ENCODE measurements at regions of chr4 and their contacts with region 1.

Region 1: DNA sequence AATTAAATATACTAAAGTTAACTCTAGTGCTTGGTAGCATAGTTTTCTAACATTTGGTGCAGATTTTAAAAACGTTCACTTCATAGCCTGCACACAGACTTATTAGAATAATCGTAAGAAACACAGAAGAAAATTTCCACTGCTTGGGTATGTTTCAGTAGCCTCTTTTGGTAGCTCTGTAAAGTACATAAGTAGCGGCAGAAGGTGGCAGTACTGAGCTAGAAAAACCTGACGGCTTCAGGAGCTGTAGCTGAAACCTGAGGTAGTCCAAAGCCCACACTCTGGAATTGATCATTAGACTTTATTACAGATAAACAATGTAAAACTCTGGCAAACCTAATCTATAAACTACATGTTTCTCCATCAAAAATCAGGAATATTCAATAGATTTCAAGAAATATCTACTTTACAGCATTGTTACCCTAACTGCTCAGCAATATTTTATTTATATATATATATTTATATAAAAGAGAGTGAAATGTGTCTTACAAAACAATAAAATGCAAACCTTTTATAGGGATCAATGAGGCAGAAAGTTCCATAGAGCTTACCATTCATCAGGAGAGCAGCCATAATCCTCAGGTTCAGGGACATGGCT is 88.2 kb downstream of the ATP8A1 start:
- DNase-seq: peak; percentile 77 to 90 (median 83)
- H3K4me3 ChIP-seq: no peak overlapping the region
- H3K27ac ChIP-seq: peak overlapping the region in 1 of 2 experiments; percentile 28
- H3K4me1 ChIP-seq: no peaks in the 10 kb centered on the region
- H3K27me3 ChIP-seq: no peaks in the 10 kb centered on the region

Region 2: DNA sequence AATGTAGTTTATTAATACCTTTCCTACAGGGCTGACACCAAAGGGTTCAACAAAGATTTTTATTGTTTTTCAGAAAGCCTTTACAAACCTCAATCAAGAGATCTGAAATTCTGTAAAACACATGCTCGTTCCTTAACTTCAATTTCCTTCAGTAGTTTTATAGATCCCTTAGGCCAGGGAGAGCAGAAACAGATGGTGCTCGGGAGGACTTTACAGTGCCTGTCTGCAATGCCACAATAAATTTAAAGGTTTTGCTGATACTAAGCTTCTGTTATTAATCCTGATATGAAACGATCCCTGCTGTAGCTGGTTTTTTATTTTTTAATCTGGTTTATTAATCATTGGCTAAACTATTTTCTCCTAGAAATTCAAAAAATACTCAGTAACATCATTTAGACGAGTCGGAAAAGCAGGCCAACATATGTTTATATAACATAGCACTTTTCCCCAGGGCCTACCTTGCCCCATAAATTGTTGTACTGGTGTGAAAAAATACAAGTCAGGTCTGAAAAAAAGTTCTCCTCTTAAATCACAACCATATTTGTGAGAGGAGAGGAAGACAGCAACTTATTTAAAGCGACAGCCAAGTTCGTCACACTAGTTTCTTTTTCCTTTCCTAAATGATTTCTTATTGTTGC is 131.7 kb before region 1 on chr4:
- CTCF ChIA-PET with region 1: no interaction called
- POLR2A ChIA-PET with region 1: no interaction called
- DNase-seq: no peak
- H3K4me3 ChIP-seq: no peak overlapping the region
- H3K27ac ChIP-seq: no peak overlapping the region
- H3K4me1 ChIP-seq: no peaks in the 10 kb centered on the region
- H3K27me3 ChIP-seq: no peaks in the 10 kb centered on the region

Region 3: DNA sequence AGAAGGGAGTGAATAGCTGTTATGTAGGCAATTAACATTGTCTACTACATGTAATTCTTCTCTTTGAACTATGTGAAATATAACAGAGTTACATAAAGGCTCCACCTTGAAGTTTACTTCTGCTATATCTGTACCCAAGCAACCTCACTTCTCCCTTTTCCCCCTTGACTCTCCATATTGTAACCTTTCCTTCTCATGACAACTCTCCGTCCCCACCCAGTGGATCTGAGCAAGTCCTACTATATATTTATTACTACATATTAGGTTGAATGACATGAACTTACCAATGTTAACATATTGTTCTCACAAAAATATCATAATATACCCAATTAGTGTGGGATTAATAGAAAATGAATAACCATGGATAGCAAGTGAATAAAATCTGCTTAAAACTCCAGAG is 181.4 kb after region 1 on chr4:
- CTCF ChIA-PET with region 1: interaction called, 90 read pairs
- POLR2A ChIA-PET with region 1: no interaction called
- DNase-seq: peak; percentile 86 to 96 (median 95)
- H3K4me3 ChIP-seq: no peak overlapping the region
- H3K27ac ChIP-seq: no peak overlapping the region
- H3K4me1 ChIP-seq: peaks cover 0 to 3% (median 1%) of the 10 kb centered on the region in 4 experiments
- H3K27me3 ChIP-seq: no peaks in the 10 kb centered on the region

Region 4: GRCh38 chr4:42865572-42866189 is 297.0 kb after region 1 on chr4:
- CTCF ChIA-PET with region 1: interaction called, 23 read pairs
- POLR2A ChIA-PET with region 1: no interaction called
- DNase-seq: peak; percentile 40 to 75 (median 62)
- H3K4me3 ChIP-seq: no peak overlapping the region
- H3K27ac ChIP-seq: no peak overlapping the region
- H3K4me1 ChIP-seq: no peaks in the 10 kb centered on the region
- H3K27me3 ChIP-seq: peaks cover 0 to 6% (median 4%) of the 10 kb centered on the region in 5 experiments

Region 5: GRCh38 chr4:43089730-43090129 is 521.0 kb after region 1 on chr4:
- CTCF ChIA-PET with region 1: no interaction called
- POLR2A ChIA-PET with region 1: no interaction called
- DNase-seq: no peak
- H3K4me3 ChIP-seq: no peak overlapping the region
- H3K27ac ChIP-seq: no peak overlapping the region
- H3K4me1 ChIP-seq: no peaks in the 10 kb centered on the region
- H3K27me3 ChIP-seq: no peaks in the 10 kb centered on the region